Right ventricle myocardium superior (tissue), 1 donor: ENCODE measurements at regions of chr13 and their contacts with region 1.

Region 1: DNA sequence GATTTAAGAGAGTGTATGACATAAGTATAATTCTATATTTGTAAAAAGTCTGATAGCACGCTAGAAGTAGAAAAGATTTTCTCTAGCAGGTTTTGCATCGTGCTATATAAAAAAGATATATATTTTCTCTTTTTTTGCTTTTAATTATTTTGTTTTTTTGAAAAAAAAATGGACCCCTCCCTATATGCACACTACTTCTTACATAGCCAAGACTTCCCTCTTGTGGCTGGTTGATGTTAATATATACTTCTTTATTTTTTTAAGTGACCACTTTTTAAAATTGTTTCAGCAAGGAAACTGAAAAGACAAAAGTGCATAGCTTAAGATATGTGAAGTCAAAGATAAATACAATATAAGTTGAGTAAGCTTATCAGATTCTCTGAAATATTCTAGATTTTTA is 1202.8 kb downstream of the DIAPH3 start:
- DNase-seq: no peak
- ATAC-seq: no peak

Region 2: DNA sequence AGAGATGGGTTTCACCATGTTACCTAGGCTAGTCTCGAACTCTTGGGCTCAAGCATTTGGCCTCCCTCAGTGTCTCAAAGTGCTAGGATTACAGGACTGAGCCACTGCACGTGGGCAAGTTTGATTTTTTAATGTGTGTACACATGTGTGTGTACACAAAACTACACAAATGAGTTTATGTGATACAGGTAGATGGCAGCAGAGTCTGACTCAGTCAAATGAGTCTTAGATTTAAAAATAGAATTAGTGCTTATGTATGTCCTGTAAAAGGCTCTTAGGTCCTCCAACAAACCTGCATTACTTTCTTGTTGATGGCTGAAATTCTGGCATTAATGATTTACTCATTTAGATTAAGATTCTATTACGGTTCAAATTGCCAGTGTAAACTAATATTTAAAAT is 1035.6 kb before region 1 on chr13:
- intact Hi-C with region 1: loop called (anchors 10 kb)
- DNase-seq: no peak
- ATAC-seq: peak; percentile 79

Region 3: GRCh38 chr13:57969951-57970350 is 990.9 kb before region 1 on chr13:
- intact Hi-C with region 1: no loop called
- DNase-seq: no peak
- ATAC-seq: no peak